ENCODE measurements at regions of chr15 and their contacts with region 1.

Region 1: GRCh38 chr15:62928242-62928995 is 114.1 kb upstream of the TPM1 start:
- DNase-seq: peak; percentile 68
- H3K4me3 ChIP-seq: peak overlapping the region in 1 of 3 experiments; percentile 40
- H3K27ac ChIP-seq: peak overlapping the region; percentile 99
- H3K4me1 ChIP-seq: peaks cover 21% of the 10 kb centered on the region
- H3K27me3 ChIP-seq: no peaks in the 10 kb centered on the region
- CTCF ChIP-seq: peak; percentile 5 to 9
- POLR2A ChIP-seq: no peak

Region 2: GRCh38 chr15:62782039-62782791 is 146.2 kb before region 1 on chr15:
- CTCF ChIA-PET with region 1: no interaction called
- POLR2A ChIA-PET with region 1: no interaction called
- dilution Hi-C with region 1: no loop called
- intact Hi-C with region 1: loop called (anchors 10 kb)
- DNase-seq: peak; percentile 90
- H3K4me3 ChIP-seq: no peak overlapping the region
- H3K27ac ChIP-seq: no peak overlapping the region
- H3K4me1 ChIP-seq: peaks cover 8% of the 10 kb centered on the region
- H3K27me3 ChIP-seq: no peaks in the 10 kb centered on the region
- CTCF ChIP-seq: peak; percentile 73 to 77
- POLR2A ChIP-seq: no peak

Region 3: DNA sequence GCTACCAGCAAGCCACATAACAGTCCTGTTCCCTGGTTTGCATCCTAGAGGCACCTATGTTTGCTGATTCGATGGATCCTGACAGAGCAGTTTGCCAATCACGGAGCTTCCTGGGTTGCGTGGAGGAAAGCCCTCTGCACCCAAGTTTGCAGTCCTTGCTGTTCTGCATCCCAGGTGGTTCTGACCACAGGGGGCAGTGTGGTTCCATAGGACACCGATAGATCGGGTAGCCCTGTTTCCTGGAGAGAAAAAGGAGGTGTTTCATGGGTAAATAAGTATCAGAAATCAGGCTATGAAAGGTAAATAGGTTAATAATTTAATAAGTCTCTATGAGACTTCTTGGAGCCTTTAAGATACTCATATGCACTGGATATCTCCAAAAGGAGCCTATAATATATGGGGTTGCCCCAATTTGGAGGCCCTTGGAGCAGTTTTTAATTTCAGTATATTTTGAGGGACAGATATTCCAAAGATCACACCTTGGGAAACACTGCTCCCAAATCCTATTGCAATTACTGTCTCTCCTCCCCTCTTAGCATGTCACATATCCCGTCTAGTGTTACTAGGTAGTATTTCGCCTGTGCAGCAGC is 80.4 kb before region 1 on chr15:
- CTCF ChIA-PET with region 1: interaction called, 3 read pairs
- POLR2A ChIA-PET with region 1: no interaction called
- dilution Hi-C with region 1: no loop called
- intact Hi-C with region 1: loop called (anchors 1 kb)
- DNase-seq: peak; percentile 65
- H3K4me3 ChIP-seq: no peak overlapping the region
- H3K27ac ChIP-seq: peak overlapping the region; percentile 44
- H3K4me1 ChIP-seq: peaks cover 39% of the 10 kb centered on the region
- H3K27me3 ChIP-seq: no peaks in the 10 kb centered on the region
- CTCF ChIP-seq: peak; percentile 57 to 73
- POLR2A ChIP-seq: no peak

Region 4: GRCh38 chr15:62940755-62941361 is 12.4 kb after region 1 on chr15:
- CTCF ChIA-PET with region 1: interaction called, 10 read pairs
- POLR2A ChIA-PET with region 1: no interaction called
- dilution Hi-C with region 1: no loop called
- intact Hi-C with region 1: no loop called
- DNase-seq: peak; percentile 25
- H3K4me3 ChIP-seq: no peak overlapping the region
- H3K27ac ChIP-seq: no peak overlapping the region
- H3K4me1 ChIP-seq: no peaks in the 10 kb centered on the region
- H3K27me3 ChIP-seq: no peaks in the 10 kb centered on the region
- CTCF ChIP-seq: no peak
- POLR2A ChIP-seq: no peak

Region 5: DNA sequence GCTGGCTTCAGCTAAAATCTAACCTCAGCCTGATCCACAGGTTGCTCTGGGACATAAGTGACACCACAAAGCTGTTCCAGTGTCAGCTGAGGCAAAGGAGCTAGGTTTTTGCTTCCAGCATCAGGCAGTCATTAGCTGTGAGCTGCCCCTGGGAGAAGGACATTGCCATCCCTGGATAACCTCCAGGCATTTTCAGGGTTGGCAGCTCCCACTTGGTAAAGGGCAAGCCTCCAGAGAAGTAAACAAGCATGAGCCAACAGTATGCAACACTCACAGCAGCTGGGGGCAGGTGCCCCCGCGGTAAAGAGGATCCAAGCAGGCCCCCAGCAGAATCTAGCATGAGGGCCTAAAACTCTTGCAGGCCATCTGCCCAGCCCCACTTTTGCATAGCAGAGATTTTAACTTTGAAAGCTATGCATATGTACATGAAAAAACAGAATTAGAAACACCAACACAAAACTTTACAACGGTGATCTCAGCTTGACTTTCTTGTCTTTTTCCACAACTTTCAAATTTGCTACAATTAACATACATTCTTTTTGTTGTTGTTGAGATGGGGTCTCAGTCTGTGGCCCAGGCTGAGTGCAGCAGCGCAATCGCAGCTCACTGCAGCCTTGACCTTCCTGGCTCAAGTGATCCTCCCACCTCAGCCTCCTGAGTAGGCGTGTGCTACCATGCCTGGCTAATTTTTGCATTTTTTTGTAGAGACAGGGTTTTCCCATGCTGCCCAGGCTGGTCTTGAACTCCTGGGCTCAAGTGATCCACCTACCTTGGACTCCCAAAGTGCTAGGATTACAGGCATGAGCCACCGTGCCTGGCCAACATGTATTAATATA is 30.3 kb after region 1 on chr15:
- CTCF ChIA-PET with region 1: no interaction called
- POLR2A ChIA-PET with region 1: no interaction called
- dilution Hi-C with region 1: no loop called
- intact Hi-C with region 1: loop called (anchors 1 kb)
- DNase-seq: no peak
- H3K4me3 ChIP-seq: no peak overlapping the region
- H3K27ac ChIP-seq: no peak overlapping the region
- H3K4me1 ChIP-seq: peaks cover 18% of the 10 kb centered on the region
- H3K27me3 ChIP-seq: no peaks in the 10 kb centered on the region
- CTCF ChIP-seq: no peak
- POLR2A ChIP-seq: no peak

Region 6: GRCh38 chr15:63041974-63042819 is 113.8 kb after region 1 on chr15 and contains the start of gene TPM1:
- CTCF ChIA-PET with region 1: interaction called, 11 read pairs
- POLR2A ChIA-PET with region 1: interaction called, 3 read pairs
- dilution Hi-C with region 1: no loop called
- intact Hi-C with region 1: loop called (anchors 1 kb)
- DNase-seq: peak; percentile 91
- H3K4me3 ChIP-seq: peak within 1 kb of the TSS; percentile 77 to 95 (median 83)
- H3K27ac ChIP-seq: peak within 1 kb of the TSS; percentile 87
- H3K4me1 ChIP-seq: peaks cover 31% of the 10 kb centered on the region
- H3K27me3 ChIP-seq: no peaks in the 10 kb centered on the region
- CTCF ChIP-seq: peak in 1 of 2 donors; percentile 12
- POLR2A ChIP-seq: peak; percentile 91
- total RNA-seq, gene TPM1: 558 and 678 TPM in 2 replicates

Region 7: GRCh38 chr15:63048115-63048775 is 119.8 kb after region 1 on chr15:
- CTCF ChIA-PET with region 1: interaction called, 11 read pairs
- POLR2A ChIA-PET with region 1: interaction called, 3 read pairs
- dilution Hi-C with region 1: no loop called
- intact Hi-C with region 1: no loop called
- DNase-seq: peak; percentile 94
- H3K4me3 ChIP-seq: peak overlapping the region; percentile 72 to 87 (median 78)
- H3K27ac ChIP-seq: peak overlapping the region; percentile 68
- H3K4me1 ChIP-seq: peaks cover 81% of the 10 kb centered on the region
- H3K27me3 ChIP-seq: no peaks in the 10 kb centered on the region
- CTCF ChIP-seq: peak; percentile 92 to 95
- POLR2A ChIP-seq: peak; percentile 66